ENCODE measurements at regions of chr1 and their contacts with region 1.

Region 1: GRCh38 chr1:32892368-32893197 is 6.3 kb downstream of the HPCA start:
- DNase-seq: no peak
- H3K4me3 ChIP-seq: peak overlapping the region; percentile 54
- H3K27ac ChIP-seq: no peak overlapping the region
- H3K27me3 ChIP-seq: peaks cover 37% of the 10 kb centered on the region
- CTCF ChIP-seq: peak; percentile 23; the same call in 1 of the 2 replicates

Region 2: DNA sequence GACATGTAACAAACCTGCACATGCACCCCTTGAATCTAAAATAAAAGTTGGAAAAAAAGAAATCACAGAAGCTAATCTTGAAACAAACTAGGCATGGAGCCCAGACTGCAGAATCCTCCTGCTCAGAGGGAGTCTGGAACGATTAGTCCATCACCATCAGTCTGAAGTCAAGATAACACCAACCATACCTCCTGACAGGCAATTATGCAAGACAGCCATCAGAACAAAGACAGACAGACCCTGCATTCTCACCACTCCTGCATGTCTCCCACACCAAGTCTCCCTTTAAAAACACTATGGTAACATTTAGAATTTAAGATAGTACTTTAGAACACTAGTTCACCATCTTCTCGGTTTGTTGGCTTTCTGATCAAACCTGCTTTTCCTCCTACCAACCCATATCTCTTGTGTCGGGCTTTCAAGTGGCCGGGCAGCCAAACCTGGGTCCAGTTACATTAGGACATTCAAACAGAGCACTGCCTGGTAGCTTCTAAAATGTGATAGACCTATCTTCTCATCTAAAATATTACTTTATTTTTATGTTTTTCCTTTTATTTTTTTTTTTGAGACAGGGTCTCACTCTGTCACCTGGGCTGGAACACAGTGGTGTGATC is 85.6 kb before region 1 on chr1:
- CTCF ChIA-PET with region 1: no interaction called
- POLR2A ChIA-PET with region 1: no interaction called
- DNase-seq: no peak
- H3K4me3 ChIP-seq: no peak overlapping the region
- H3K27ac ChIP-seq: no peak overlapping the region
- H3K27me3 ChIP-seq: no peaks in the 10 kb centered on the region
- CTCF ChIP-seq: no peak

Region 3: GRCh38 chr1:32876341-32877210 is 16.0 kb before region 1 on chr1:
- CTCF ChIA-PET with region 1: interaction called, 31 read pairs
- POLR2A ChIA-PET with region 1: no interaction called
- DNase-seq: no peak
- H3K4me3 ChIP-seq: no peak overlapping the region
- H3K27ac ChIP-seq: no peak overlapping the region
- H3K27me3 ChIP-seq: peaks cover 3% of the 10 kb centered on the region
- CTCF ChIP-seq: peak; percentile 78

Region 4: GRCh38 chr1:33997127-33998036 is 1104.8 kb after region 1 on chr1:
- CTCF ChIA-PET with region 1: no interaction called
- POLR2A ChIA-PET with region 1: no interaction called
- DNase-seq: no peak
- H3K4me3 ChIP-seq: no peak overlapping the region
- H3K27ac ChIP-seq: no peak overlapping the region
- H3K27me3 ChIP-seq: no peaks in the 10 kb centered on the region
- CTCF ChIP-seq: no peak